IMR-90 (cell line): ENCODE measurements at regions of chr7 and their contacts with region 1.

Region 1: GRCh38 chr7:98014352-98014751 is 24.4 kb upstream of the OCM2 start:
- DNase-seq: no peak
- ATAC-seq: no peak
- H3K4me3 ChIP-seq: no peak overlapping the region
- H3K27ac ChIP-seq: no peak overlapping the region
- H3K4me1 ChIP-seq: no peaks in the 10 kb centered on the region
- H3K27me3 ChIP-seq: peaks cover 2% of the 10 kb centered on the region; the same call in 1 of the 2 replicates
- CTCF ChIP-seq: no peak
- POLR2A ChIP-seq: no peak
- RAD21 ChIP-seq: no peak

Region 2: DNA sequence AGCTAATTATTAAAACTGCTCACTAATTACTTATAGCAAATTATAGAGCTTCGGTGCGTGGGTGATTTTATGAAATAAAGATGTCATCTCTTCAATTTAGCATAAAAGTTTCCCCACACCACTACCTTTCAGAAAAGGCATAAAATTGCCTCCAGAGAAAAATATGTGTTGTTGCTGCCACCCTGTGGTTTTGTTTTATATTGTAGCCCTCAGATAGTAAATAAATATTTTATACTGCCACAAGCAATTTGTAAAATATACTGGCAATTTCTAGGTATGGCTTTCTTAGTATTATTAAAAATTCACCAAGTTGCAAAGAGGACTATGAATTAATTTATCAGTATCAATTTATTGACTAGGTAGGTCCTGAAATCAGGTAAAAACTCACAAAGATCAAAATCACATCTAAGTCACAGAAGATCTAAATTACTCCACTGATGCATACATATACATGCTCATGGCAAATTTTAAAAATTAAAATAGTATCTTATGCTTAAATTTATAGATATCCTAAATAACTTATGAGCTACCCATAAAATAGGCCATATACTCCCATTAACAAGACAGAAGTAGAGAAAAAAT is 168.6 kb before region 1 on chr7:
- CTCF ChIA-PET with region 1: no interaction called
- POLR2A ChIA-PET with region 1: no interaction called
- dilution Hi-C with region 1: no loop called
- in situ Hi-C with region 1: no loop called
- intact Hi-C with region 1: loop called (anchors 10 kb)
- DNase-seq: peak; percentile 15
- ATAC-seq: peak; percentile 61; the same call in 1 of the 2 replicates
- H3K4me3 ChIP-seq: no peak overlapping the region
- H3K27ac ChIP-seq: no peak overlapping the region
- H3K4me1 ChIP-seq: no peaks in the 10 kb centered on the region
- H3K27me3 ChIP-seq: 0 out of 2 replicates have a peak, but pooled peaks cover 2% of the 10 kb centered on the region
- CTCF ChIP-seq: peak; percentile 52
- POLR2A ChIP-seq: no peak
- RAD21 ChIP-seq: peak; percentile 23; the same call in 1 of the 2 replicates